Gastrocnemius medialis (tissue), 4 donors: ENCODE measurements at regions of chr9 and their contacts with region 1.

Region 1: GRCh38 chr9:137240861-137241489 is at the start of gene TUBB4B:
- DNase-seq: peak; percentile 99 to 100
- ATAC-seq: peak; percentile 92 to 94
- H3K4me3 ChIP-seq: peak within 1 kb of the TSS; percentile 79 to 100 (median 85)
- H3K27ac ChIP-seq: peak within 1 kb of the TSS; percentile 93 to 98 (median 97)
- H3K4me1 ChIP-seq: peaks cover 60 to 77% of the 10 kb centered on the region in 2 donors
- H3K27me3 ChIP-seq: no peaks in the 10 kb centered on the region
- CTCF ChIP-seq: peak in 1 of 5 experiments; percentile 19
- POLR2A ChIP-seq: peak; percentile 100
- total RNA-seq, gene TUBB4B: 222 to 495 (median 363) TPM

Region 2: GRCh38 chr9:136790927-136791641 is 449.9 kb before region 1 on chr9 and contains the start of gene TMEM141:
- in situ Hi-C with region 1: no loop called
- intact Hi-C with region 1: loop called (anchors 10 kb)
- DNase-seq: peak; percentile 100
- ATAC-seq: peak; percentile 87 to 91
- H3K4me3 ChIP-seq: peak within 1 kb of the TSS; percentile 66 to 92 (median 81)
- H3K27ac ChIP-seq: peak within 1 kb of the TSS; percentile 94 to 99 (median 95)
- H3K4me1 ChIP-seq: peaks cover 12 to 18% of the 10 kb centered on the region in 2 donors
- H3K27me3 ChIP-seq: no peaks in the 10 kb centered on the region
- CTCF ChIP-seq: no peak
- POLR2A ChIP-seq: peak; percentile 60 to 82
- total RNA-seq, gene TMEM141: 46.9 to 70.2 (median 51.1) TPM

Region 3: GRCh38 chr9:137188490-137189296 is 52.3 kb before region 1 on chr9 and contains the starts of genes ANAPC2 and SSNA1:
- in situ Hi-C with region 1: no loop called
- intact Hi-C with region 1: loop called (anchors 2 kb)
- DNase-seq: peak; percentile 79 to 88
- ATAC-seq: peak; percentile 92 to 95
- H3K4me3 ChIP-seq: peak within 1 kb of the TSS; percentile 68 to 100 (median 97)
- H3K27ac ChIP-seq: peak within 1 kb of the TSS; percentile 85 to 98 (median 96)
- H3K4me1 ChIP-seq: peaks cover 39 to 44% of the 10 kb centered on the region in 2 donors
- H3K27me3 ChIP-seq: no peaks in the 10 kb centered on the region
- CTCF ChIP-seq: peak in 4 of 5 experiments; percentile 8 to 72 (median 38)
- POLR2A ChIP-seq: peak; percentile 84 to 92
- total RNA-seq, gene ANAPC2: 10.2 to 12.4 (median 10.8) TPM
- total RNA-seq, gene SSNA1: 73.3 to 164 (median 94.4) TPM

Region 4: GRCh38 chr9:137223078-137223970 is 17.7 kb before region 1 on chr9:
- in situ Hi-C with region 1: no loop called
- intact Hi-C with region 1: no loop called
- DNase-seq: peak; percentile 97 to 98
- ATAC-seq: peak; percentile 89 to 90
- H3K4me3 ChIP-seq: peak overlapping the region; percentile 63 to 94 (median 88)
- H3K27ac ChIP-seq: peak overlapping the region; percentile 87 to 93 (median 90)
- H3K4me1 ChIP-seq: peaks cover 8 to 21% of the 10 kb centered on the region in 2 donors
- H3K27me3 ChIP-seq: peaks cover 5 to 7% (median 7%) of the 10 kb centered on the region in 3 donors
- CTCF ChIP-seq: no peak
- POLR2A ChIP-seq: peak; percentile 61

Region 5: GRCh38 chr9:137254624-137255447 is 13.9 kb after region 1 on chr9 and contains the start of gene NELFB:
- in situ Hi-C with region 1: no loop called
- intact Hi-C with region 1: loop called (anchors 1 kb)
- DNase-seq: peak; percentile 79 to 85
- ATAC-seq: peak; percentile 91 to 94
- H3K4me3 ChIP-seq: peak within 1 kb of the TSS; percentile 77 to 99 (median 92)
- H3K27ac ChIP-seq: peak within 1 kb of the TSS; percentile 68 to 91 (median 81)
- H3K4me1 ChIP-seq: peaks cover 22 to 29% of the 10 kb centered on the region in 2 donors
- H3K27me3 ChIP-seq: no peaks in the 10 kb centered on the region
- CTCF ChIP-seq: peak in 3 of 5 experiments; percentile 8 to 36 (median 28)
- POLR2A ChIP-seq: peak; percentile 71 to 79
- total RNA-seq, gene NELFB: 21.6 to 61.5 (median 39.4) TPM

Region 6: GRCh38 chr9:137269231-137269772 is 28.3 kb after region 1 on chr9:
- in situ Hi-C with region 1: no loop called
- intact Hi-C with region 1: loop called (anchors 2 kb)
- DNase-seq: peak; percentile 67 to 84
- ATAC-seq: peak; percentile 92 to 93
- H3K4me3 ChIP-seq: peak overlapping the region; percentile 59 to 60 (median 60)
- H3K27ac ChIP-seq: peak overlapping the region; percentile 88 to 94 (median 92)
- H3K4me1 ChIP-seq: peaks cover 24 to 27% of the 10 kb centered on the region in 2 donors
- H3K27me3 ChIP-seq: no peaks in the 10 kb centered on the region
- CTCF ChIP-seq: no peak
- POLR2A ChIP-seq: peak; percentile 52 to 72

Region 7: GRCh38 chr9:137286975-137287383 is 46.0 kb after region 1 on chr9:
- in situ Hi-C with region 1: no loop called
- intact Hi-C with region 1: no loop called
- DNase-seq: no peak
- ATAC-seq: peak; percentile 47 to 58
- H3K4me3 ChIP-seq: no peak overlapping the region
- H3K27ac ChIP-seq: no peak overlapping the region
- H3K4me1 ChIP-seq: no peaks in the 10 kb centered on the region
- H3K27me3 ChIP-seq: peaks cover 0 to 18% (median 13%) of the 10 kb centered on the region in 3 donors
- CTCF ChIP-seq: peak in 3 of 5 experiments; percentile 37 to 52 (median 42)
- POLR2A ChIP-seq: no peak